Activated CD8-positive, alpha-beta T cell treated with anti-CD3 and anti-CD28 coated beads for 36 hours (primary cell): ENCODE measurements at regions of chr6 and their contacts with region 1.

Region 1: GRCh38 chr6:135054569-135055498 is at the start of gene HBS1L:
- DNase-seq: peak; percentile 98
- ATAC-seq: peak; percentile 97
- H3K4me3 Mint-ChIP-seq: peak within 1 kb of the TSS; percentile 96
- H3K27ac Mint-ChIP-seq: peak within 1 kb of the TSS; percentile 99
- H3K4me1 Mint-ChIP-seq: peaks cover 25% of the 10 kb centered on the region
- H3K27me3 Mint-ChIP-seq: no peaks in the 10 kb centered on the region
- CTCF ChIP-seq: no peak
- total RNA-seq, gene HBS1L: 146 to 147 TPM

Region 2: DNA sequence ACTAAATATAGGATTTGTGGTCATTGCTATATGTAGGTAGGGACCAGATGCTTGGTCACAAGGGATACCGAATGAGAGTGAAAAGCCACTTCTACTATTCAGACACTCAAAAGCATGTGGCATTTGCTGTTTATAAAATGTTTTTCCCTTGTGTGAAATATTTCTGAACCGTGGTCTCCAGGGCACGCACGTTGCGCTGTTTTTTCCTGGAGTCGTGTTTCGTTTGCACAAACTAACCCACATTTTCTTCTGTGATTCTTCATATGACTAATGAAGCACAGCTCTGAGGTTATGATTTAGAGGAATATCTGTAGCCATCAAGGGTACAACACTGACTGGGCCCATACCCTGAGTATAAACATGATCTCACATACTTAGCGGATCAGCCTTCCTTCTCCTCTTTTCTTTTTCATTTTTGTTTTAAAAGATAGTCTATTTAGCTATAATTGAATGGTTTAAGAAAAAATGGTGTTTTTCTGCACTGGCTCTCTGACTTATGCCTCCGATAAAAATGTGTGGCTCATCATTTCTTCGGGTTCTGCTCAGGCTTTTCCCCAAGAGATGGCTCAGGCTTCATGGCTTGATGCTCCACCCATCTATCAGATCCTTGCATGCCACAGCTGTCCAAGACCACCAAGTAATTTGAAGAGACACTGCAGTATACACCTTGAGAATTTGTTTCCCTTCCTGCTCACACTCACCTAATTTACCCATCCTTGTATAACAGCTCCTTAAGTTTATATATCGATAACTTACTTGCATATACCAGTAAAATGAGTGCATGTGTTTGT is 59.7 kb after region 1 on chr6:
- CTCF ChIA-PET with region 1: interaction called, 4 read pairs
- POLR2A ChIA-PET with region 1: interaction called, 10 read pairs
- intact Hi-C with region 1: no loop called
- DNase-seq: peak; percentile 84
- ATAC-seq: peak; percentile 72
- H3K4me3 Mint-ChIP-seq: peak overlapping the region; percentile 7
- H3K27ac Mint-ChIP-seq: peak overlapping the region; percentile 91
- H3K4me1 Mint-ChIP-seq: peaks cover 79% of the 10 kb centered on the region
- H3K27me3 Mint-ChIP-seq: no peaks in the 10 kb centered on the region
- CTCF ChIP-seq: no peak

Region 3: GRCh38 chr6:135128268-135128914 is 73.6 kb after region 1 on chr6:
- CTCF ChIA-PET with region 1: no interaction called
- POLR2A ChIA-PET with region 1: interaction called, 25 read pairs
- intact Hi-C with region 1: no loop called
- DNase-seq: peak; percentile 88
- ATAC-seq: peak; percentile 91
- H3K4me3 Mint-ChIP-seq: peak overlapping the region; percentile 52
- H3K27ac Mint-ChIP-seq: peak overlapping the region; percentile 97
- H3K4me1 Mint-ChIP-seq: peaks cover 56% of the 10 kb centered on the region
- H3K27me3 Mint-ChIP-seq: no peaks in the 10 kb centered on the region
- CTCF ChIP-seq: no peak